Posterior cingulate gyrus (tissue), 11 donors: ENCODE measurements at regions of chr10 and their contacts with region 1.

Region 1: DNA sequence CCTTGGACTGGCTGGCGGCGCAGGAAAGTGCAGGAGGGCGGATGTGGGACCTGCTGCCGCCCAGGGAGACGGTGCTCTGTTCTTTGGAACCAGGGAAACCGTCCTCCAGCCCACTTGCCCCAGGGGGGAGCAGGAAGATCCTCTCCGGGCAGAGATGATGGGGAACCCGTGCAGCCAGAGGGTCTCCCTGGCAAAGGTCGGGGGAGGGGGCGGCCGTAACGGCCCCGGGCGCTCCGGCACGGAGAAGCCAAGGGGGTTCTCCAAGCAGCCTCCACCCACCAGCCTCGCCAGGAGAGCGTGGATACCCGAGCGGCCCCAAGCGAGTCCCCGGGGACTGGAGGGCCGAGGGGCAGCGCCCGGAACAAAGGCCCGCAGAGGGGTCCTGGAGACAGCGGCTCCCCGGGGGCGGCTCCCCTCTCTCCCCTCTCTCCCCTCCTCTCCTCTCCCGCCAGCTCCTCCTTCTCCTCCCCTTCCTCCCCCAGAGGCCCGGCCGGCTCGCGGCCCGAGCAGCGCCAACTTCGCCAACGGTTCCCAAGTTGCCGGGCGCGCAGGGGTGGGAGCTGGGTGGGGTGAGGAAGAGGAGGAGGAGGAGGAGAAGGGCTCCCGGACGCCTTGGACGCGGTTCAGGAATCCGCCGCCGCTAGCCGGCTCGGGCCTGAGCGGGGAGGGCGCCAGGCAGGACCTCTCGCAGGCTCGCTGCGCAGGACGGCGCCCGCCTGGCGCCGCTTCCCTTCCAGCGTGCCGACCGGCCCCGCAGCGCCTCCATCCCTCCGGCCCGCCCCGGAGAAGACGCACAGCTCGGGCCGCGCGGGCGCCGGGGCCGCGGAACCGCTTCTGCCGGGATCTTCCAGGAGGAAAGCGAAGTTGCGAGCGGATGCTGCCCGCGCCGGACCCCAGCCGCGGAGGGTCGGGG is at the start of gene CHST3:
- DNase-seq: peak; percentile 42 to 94 (median 68)

Region 2: GRCh38 chr10:72009411-72010081 is 45.5 kb after region 1 on chr10:
- intact Hi-C with region 1: loop called (anchors 5 kb)
- DNase-seq: peak in 8 of 10 donors; percentile 42 to 90 (median 66)